IMR-90 (cell line): ENCODE measurements at regions of chr12 and their contacts with region 1.

Region 1: GRCh38 chr12:43758728-43759563 is at the starts of genes IRAK4 and PUS7L:
- DNase-seq: peak; percentile 96
- ATAC-seq: peak; percentile 98
- H3K4me3 ChIP-seq: peak within 1 kb of the TSS; percentile 82
- H3K27ac ChIP-seq: peak within 1 kb of the TSS; percentile 78
- H3K4me1 ChIP-seq: peaks cover 12% of the 10 kb centered on the region
- H3K27me3 ChIP-seq: no peaks in the 10 kb centered on the region
- CTCF ChIP-seq: peak; percentile 64
- POLR2A ChIP-seq: peak; percentile 69; the same call in 1 of the 2 replicates
- RAD21 ChIP-seq: peak; percentile 38; the same call in 1 of the 2 replicates
- total RNA-seq, gene IRAK4: 27.6 and 30.8 TPM in 2 replicates
- total RNA-seq, gene PUS7L: 44.8 and 58.6 TPM in 2 replicates

Region 2: DNA sequence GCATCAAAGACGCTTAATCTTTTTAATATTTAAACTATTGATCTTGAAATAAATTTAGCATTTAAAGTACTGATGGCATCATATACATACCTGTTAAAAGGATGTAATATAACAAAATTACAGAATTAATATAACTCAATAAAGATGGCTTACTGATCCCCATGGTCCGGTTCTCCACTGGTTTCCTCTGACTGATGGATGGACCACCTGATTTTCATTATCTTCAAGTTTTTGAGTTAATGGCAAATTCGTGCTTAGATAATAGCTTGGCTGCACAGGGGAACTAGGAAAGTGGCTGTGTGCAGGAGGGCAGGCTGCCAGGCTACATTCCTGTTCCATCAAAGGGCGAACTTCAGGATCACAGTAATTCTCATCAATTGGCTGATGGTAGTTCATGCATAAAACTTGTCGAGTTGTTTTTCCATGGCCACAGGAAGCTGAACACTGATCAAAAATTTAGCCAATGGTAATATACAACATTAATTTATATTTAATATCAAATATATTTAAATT is 330.8 kb before region 1 on chr12:
- CTCF ChIA-PET with region 1: no interaction called
- POLR2A ChIA-PET with region 1: no interaction called
- dilution Hi-C with region 1: no loop called
- in situ Hi-C with region 1: no loop called
- intact Hi-C with region 1: no loop called
- DNase-seq: no peak
- ATAC-seq: no peak
- H3K4me3 ChIP-seq: no peak overlapping the region
- H3K27ac ChIP-seq: no peak overlapping the region
- H3K4me1 ChIP-seq: no peaks in the 10 kb centered on the region
- H3K27me3 ChIP-seq: no peaks in the 10 kb centered on the region
- CTCF ChIP-seq: no peak
- POLR2A ChIP-seq: no peak
- RAD21 ChIP-seq: no peak

Region 3: DNA sequence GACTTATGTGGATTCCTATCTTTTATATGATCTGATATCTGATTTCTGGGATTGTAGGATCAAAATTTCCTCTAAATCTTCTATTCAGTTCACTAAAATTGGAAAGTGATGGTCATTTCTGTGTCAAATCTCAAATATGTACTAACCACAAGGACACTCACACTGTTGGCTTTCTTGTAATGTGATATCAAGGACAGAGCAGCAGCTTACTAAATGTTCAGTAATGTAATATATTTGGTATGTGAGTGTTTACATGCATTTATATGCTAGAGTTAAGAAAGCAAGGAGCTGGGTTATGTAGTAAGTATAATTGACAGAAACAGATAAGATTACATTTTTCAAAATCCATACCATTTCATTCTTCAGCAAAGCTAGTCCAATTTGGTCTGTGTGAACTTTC is 16.8 kb before region 1 on chr12:
- CTCF ChIA-PET with region 1: interaction called, 3 read pairs
- POLR2A ChIA-PET with region 1: no interaction called
- dilution Hi-C with region 1: no loop called
- in situ Hi-C with region 1: no loop called
- intact Hi-C with region 1: loop called (anchors 1 kb)
- DNase-seq: peak; percentile 94
- ATAC-seq: peak; percentile 91
- H3K4me3 ChIP-seq: no peak overlapping the region
- H3K27ac ChIP-seq: no peak overlapping the region
- H3K4me1 ChIP-seq: peaks cover 7% of the 10 kb centered on the region
- H3K27me3 ChIP-seq: no peaks in the 10 kb centered on the region
- CTCF ChIP-seq: no peak
- POLR2A ChIP-seq: no peak
- RAD21 ChIP-seq: no peak

Region 4: DNA sequence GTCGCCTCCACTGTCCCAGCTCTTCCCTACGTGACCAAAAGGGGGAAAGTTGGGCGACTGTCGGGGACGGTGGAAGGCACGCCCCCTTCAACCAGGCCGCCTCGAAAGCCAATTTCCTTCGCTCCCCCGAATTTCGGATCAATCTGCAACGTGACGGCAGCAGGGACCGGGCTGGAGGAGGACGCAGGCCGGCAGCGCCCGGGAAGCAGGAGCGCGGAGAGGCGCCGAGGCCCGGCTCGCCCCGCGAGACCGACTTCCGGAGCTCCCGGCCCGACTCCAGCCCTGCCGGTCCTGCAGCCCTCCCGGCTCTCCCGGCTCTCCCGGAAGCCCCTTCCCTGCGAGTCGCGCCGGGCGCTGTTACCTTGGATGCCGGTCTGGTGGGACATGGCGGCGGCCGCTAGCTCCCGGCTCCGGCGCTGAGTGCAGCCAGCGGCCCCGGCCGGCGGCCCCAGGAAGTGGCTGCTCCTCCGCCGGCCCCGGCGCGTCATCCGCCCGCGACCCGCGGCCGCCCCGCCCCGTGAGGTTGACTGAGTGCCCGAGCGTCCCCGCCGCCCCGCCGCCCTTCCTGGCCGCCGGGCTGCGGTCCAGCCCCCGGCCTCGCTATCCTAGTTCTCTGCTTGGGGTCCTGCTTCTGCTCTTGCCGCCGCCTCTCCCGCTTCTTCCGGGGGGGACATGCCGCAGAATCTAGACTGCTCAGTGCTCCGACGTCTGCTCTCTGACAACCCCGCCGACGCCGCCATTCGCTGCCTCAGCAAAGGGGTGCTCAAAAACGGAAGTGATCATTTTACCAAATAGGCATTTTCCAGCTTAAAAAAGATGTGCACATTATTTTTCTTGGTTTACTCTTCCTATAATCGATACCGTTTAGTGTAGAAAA is 47.2 kb after region 1 on chr12 and contains the start of gene TWF1:
- CTCF ChIA-PET with region 1: no interaction called
- POLR2A ChIA-PET with region 1: no interaction called
- dilution Hi-C with region 1: no loop called
- in situ Hi-C with region 1: no loop called
- intact Hi-C with region 1: loop called (anchors 2 kb)
- DNase-seq: peak; percentile 70
- ATAC-seq: peak; percentile 98
- H3K4me3 ChIP-seq: peak within 1 kb of the TSS; percentile 89
- H3K27ac ChIP-seq: peak within 1 kb of the TSS; percentile 91
- H3K4me1 ChIP-seq: no peaks in the 10 kb centered on the region
- H3K27me3 ChIP-seq: no peaks in the 10 kb centered on the region; the same call in 1 of the 2 replicates
- CTCF ChIP-seq: peak; percentile 30
- POLR2A ChIP-seq: peak; percentile 73
- RAD21 ChIP-seq: no peak
- total RNA-seq, gene TWF1: 141 and 248 TPM in 2 replicates